ENCODE measurements at regions of chr2 and their contacts with region 1.

Region 1: DNA sequence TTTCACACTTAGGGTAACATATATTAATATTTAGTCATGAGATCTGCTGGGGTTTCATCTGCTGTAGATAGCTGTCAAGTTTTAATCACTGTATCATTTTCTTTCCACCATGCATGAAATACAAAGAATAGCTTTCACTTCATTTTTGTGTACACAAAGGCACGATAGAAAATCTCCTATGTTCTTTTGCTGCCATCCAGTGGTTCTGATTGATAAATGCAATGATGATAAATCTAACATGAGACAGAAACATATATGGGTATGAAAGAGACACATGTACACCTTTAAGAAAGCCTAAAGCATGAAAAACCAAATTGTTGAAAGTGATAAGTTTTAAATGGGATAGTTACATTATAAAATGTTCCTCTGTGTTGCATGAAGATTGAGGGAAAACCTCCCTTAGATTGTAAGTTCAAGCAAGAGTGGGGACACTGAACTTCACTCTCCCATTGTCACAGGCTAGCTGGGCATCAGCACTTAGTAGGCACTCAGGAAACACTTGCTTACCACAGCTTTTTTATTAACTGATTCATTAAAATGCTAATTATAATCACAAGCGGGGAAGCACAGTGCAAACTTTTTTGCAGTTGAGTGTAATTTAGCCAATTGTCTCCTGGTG is 31.2 kb downstream of the C1D start:
- DNase-seq: no peak
- ATAC-seq: peak; percentile 67

Region 2: DNA sequence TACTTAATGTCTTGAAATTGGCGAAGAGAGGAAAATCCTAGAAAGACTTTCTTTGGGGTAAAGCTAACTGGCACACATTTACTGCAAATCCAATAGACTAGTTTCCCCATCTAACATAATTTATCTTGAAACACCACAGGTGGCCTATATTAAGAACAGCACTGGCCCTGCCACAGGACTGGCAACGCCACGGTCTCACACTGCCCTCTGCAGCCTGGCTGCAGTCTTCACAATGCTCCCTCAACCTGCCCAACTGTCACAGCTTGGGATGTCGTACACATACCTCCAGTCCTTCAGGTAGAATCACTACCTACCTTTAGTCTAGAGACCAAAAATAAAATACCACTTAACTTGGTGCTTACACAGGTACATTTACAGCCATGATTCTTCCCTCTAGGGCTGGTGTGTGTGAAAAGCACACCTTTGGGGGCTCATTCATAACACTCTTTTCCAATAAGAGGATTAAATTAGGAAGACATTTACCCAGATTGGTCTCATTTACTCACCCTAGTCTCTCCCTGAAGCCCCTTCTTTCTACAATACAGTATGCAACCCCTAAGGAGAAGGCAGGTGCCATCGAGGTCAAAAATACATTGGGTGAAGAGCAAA is 191.1 kb before region 1 on chr2:
- intact Hi-C with region 1: loop called in 1 of 2 experiments (anchors 10 kb)
- DNase-seq: peak; percentile 42 to 43
- ATAC-seq: peak; percentile 89